BJ (cell line): ENCODE measurements at regions of chr5 and their contacts with region 1.

Region 1: GRCh38 chr5:177497292-177498033 is at the start of gene PDLIM7:
- DNase-seq: peak; percentile 89
- H3K4me3 ChIP-seq: peak within 1 kb of the TSS; percentile 86
- H3K27me3 ChIP-seq: no peaks in the 10 kb centered on the region
- CTCF ChIP-seq: peak; percentile 45
- polyA plus RNA-seq, gene PDLIM7: 344 and 624 TPM in 2 replicates

Region 2: DNA sequence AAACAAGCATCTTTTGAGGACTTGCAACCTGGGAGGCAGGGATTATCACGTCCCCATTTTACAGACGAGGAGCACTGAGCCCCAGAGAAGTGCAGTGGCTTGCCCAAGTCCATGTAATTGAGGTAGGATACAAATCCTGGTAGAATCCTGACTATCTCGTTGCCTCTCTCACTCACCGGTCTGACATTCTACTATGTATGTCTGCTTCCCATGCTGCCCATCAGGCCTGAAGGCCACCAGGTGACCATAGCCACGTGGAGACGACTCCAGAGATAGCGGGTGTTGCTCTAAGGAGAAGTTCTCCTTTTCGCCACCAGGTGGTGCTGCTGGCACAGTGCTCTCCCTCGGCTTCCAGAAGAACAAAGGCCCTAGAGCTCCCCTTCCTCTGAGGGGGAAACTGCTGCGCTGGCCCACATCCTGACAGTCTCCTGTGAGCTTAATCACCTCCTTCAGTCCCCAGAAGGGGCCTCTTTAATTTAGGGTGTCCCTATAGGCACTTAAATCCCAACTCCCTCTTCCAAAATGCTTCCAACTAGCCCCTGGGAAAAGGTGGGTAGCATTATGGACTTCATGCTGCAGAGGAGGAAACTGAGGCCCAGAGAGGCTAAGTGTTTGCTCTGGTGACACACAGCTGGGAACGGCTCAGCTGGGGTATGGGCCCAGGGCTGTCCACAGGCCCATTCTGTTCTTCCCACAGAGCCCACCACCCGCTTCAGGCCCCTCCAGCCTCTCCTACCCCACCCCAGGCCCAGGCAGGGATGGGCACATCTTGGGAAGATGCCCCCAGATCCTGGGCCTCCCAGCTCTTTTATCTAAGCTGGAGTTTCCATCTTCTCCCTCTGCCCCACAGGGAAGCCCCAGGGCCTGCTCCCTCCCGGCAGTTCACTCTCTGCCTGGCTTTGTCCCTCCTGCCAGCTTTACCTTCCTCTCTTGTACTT is 106.8 kb before region 1 on chr5:
- CTCF ChIA-PET with region 1: interaction called, 37 read pairs
- POLR2A ChIA-PET with region 1: interaction called, 3 read pairs
- DNase-seq: no peak
- H3K4me3 ChIP-seq: no peak overlapping the region
- H3K27me3 ChIP-seq: peaks cover 11% of the 10 kb centered on the region
- CTCF ChIP-seq: peak; percentile 95

Region 3: DNA sequence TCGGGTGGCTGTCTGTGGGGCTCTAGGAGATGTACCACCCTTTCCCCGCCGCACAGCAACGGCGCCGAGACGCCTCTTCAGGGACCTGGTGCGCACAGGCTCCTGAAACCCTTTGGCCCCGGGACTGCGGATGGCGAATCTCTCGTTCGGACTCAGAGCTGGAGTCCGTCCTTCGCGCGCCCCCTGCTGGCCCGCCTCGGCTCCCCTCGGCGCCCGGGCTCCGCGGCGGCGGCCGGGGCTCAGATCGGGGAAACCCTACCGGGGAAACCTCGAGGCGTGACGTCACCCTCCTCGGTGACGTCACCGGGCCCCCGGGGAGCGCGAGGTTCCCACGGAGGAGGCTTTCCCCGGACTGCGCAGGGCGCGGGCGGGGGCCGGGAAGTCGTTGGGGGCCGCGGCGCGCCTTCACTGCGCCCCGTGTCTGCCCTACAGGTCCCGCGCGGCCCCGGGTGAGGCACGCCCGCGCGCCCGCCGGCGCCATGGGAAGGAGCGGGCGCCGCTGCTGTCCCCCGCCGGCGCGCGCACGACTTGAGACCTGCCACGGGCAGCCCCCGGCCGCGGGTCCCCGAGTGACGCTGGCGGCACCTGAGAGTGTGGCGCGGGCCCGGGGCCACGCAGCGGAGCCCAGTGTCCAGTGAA is 42.9 kb before region 1 on chr5:
- CTCF ChIA-PET with region 1: interaction called, 82 read pairs
- POLR2A ChIA-PET with region 1: interaction called, 8 read pairs
- DNase-seq: no peak
- H3K4me3 ChIP-seq: peak overlapping the region; percentile 41
- H3K27me3 ChIP-seq: no peaks in the 10 kb centered on the region
- CTCF ChIP-seq: peak; percentile 62

Region 4: GRCh38 chr5:177478711-177479646 is 18.5 kb before region 1 on chr5:
- CTCF ChIA-PET with region 1: interaction called, 85 read pairs
- POLR2A ChIA-PET with region 1: interaction called, 8 read pairs
- DNase-seq: no peak
- H3K4me3 ChIP-seq: no peak overlapping the region
- H3K27me3 ChIP-seq: no peaks in the 10 kb centered on the region
- CTCF ChIP-seq: no peak

Region 5: GRCh38 chr5:177516604-177517568 is 19.4 kb after region 1 on chr5 and contains the start of gene DDX41:
- CTCF ChIA-PET with region 1: interaction called, 30 read pairs
- POLR2A ChIA-PET with region 1: interaction called, 3 read pairs
- DNase-seq: peak; percentile 98
- H3K4me3 ChIP-seq: peak within 1 kb of the TSS; percentile 91
- H3K27me3 ChIP-seq: no peaks in the 10 kb centered on the region
- CTCF ChIP-seq: peak; percentile 24; the same call in 1 of the 2 replicates
- polyA plus RNA-seq, gene DDX41: 93.3 and 144 TPM in 2 replicates

Region 6: DNA sequence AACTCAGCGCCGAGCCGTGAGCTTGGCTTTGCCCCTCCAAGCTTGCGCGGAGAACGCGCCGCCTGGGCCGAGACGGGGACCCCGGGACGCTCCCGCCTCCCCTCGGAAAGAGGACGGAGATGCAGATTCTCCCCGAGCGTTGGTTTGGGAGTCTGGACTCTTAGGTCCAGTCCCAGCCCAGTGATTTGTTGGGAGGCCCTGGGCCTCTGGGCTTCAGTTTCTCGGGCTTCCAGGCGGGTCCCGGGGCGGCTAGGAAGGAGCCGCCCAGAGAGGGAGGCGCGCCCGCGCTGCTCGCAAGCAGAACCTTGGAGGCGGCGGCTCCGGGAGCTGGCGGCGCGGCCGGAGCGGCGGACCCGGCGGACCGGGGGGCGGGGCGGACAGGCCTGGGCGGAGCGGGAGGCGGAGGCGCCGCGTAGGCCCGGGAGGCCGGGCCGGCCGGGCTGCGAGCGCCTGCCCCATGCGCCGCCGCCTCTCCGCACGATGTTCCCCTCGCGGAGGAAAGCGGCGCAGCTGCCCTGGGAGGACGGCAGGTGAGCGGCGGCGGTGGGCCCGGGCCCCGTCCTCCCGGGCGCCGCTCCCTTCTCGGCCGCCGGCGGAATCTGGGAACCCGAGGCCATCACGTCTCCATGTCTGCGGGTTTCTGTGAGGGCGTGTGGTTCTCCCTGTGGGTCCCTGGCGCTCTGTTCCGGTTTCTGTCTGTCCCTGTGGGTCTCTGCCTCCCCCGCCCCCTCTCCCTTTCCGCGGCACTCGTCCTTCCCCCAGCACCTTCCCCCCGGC is 102.5 kb after region 1 on chr5 and contains the start of gene B4GALT7:
- CTCF ChIA-PET with region 1: interaction called, 5 read pairs
- POLR2A ChIA-PET with region 1: interaction called, 10 read pairs
- DNase-seq: no peak
- H3K4me3 ChIP-seq: peak within 1 kb of the TSS; percentile 92
- H3K27me3 ChIP-seq: no peaks in the 10 kb centered on the region
- CTCF ChIP-seq: no peak
- polyA plus RNA-seq, gene B4GALT7: 23.2 and 39.5 TPM in 2 replicates